Activated CD8-positive, alpha-beta T cell treated with anti-CD3 and anti-CD28 coated beads for 36 hours (primary cell): ENCODE measurements at regions of chr17 and their contacts with region 1.

Region 1: GRCh38 chr17:40151414-40151963 is 11.2 kb downstream of the CASC3 start:
- DNase-seq: no peak
- ATAC-seq: no peak
- H3K4me3 Mint-ChIP-seq: no peak overlapping the region
- H3K27ac Mint-ChIP-seq: peak overlapping the region; percentile 62
- H3K4me1 Mint-ChIP-seq: peaks cover 59% of the 10 kb centered on the region
- H3K27me3 Mint-ChIP-seq: no peaks in the 10 kb centered on the region
- CTCF ChIP-seq: no peak

Region 2: DNA sequence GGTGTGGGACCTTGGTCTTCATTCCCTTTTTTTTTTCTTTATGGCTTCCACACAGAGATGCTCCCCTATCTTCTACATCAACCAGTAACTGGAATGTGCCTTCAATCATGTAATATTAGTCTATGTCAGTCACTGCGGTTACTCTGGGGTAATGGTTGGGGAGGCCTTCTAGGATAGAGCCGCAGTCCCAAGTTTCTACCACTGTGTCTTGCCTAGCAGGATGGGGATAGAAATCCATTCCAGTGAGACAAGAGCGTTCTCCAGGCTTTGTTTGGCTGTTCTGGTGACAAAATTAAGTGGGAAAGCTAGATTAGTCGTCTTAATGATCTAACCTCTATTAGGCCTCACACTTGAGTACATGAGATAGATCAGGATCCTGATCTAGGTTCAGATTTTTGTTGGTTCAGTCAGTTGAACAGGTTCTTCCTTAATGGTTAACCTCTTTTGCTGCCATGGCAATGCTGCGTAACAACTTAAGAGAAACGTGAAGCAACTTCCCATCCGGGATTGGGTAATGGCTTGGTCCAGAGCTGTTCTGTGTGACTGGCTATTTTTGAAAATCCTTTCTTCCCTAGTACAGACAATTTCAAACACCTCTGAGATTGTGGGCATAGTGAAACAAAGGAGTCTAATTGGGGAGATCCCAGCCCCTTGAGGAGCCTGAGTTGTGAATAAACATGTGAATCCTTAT is 21.0 kb before region 1 on chr17:
- CTCF ChIA-PET with region 1: interaction called, 6 read pairs
- POLR2A ChIA-PET with region 1: interaction called, 11 read pairs
- intact Hi-C with region 1: no loop called
- DNase-seq: no peak
- ATAC-seq: no peak
- H3K4me3 Mint-ChIP-seq: no peak overlapping the region
- H3K27ac Mint-ChIP-seq: peak overlapping the region; percentile 18
- H3K4me1 Mint-ChIP-seq: peaks cover 14% of the 10 kb centered on the region
- H3K27me3 Mint-ChIP-seq: no peaks in the 10 kb centered on the region
- CTCF ChIP-seq: no peak